Activated CD4-positive, alpha-beta T cell treated with anti-CD3 and anti-CD28 coated beads for 36 hours (primary cell): ENCODE measurements at regions of chr18 and their contacts with region 1.

Region 1: GRCh38 chr18:63422087-63422809 is at the start of gene VPS4B:
- DNase-seq: peak; percentile 100
- ATAC-seq: peak; percentile 95
- H3K4me3 Mint-ChIP-seq: peak within 1 kb of the TSS; percentile 99
- H3K27ac Mint-ChIP-seq: peak within 1 kb of the TSS; percentile 95
- H3K4me1 Mint-ChIP-seq: peaks cover 30% of the 10 kb centered on the region
- H3K27me3 Mint-ChIP-seq: no peaks in the 10 kb centered on the region
- total RNA-seq, gene VPS4B: 40.7 to 48.4 TPM

Region 2: DNA sequence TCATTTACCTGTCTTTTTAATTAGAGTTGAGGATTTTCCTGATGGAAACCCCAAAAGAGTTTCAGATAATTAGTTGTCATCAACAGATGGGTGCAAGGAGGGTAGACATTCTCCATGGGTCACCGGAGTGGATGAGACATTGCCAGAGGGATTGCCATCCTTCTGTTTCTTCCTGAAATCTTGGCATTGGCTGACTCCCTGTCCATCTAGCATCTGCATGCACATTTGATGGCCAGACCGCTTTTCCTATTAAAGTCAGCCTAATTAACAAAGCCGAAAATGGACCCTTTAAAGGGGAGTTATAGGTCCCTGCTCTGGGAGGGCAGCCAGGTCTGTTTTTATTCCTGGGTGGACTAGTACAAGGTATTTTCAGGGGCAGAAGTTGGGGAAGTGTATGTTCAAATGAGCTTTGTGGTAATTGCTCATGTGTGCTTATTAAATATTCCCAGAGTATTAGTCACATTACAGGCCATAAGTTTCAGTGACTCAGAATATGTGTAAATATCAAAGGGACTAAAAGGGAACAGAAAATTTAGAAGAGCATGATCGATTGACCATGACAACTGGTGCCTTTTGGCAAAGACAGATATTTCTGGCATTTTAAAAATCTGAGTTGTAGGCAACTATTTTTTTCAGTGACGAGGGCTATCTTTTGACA is 497.1 kb before region 1 on chr18:
- CTCF ChIA-PET with region 1: no interaction called
- POLR2A ChIA-PET with region 1: no interaction called
- intact Hi-C with region 1: no loop called
- DNase-seq: no peak
- ATAC-seq: no peak
- H3K4me3 Mint-ChIP-seq: no peak overlapping the region
- H3K27ac Mint-ChIP-seq: no peak overlapping the region
- H3K4me1 Mint-ChIP-seq: no peaks in the 10 kb centered on the region
- H3K27me3 Mint-ChIP-seq: no peaks in the 10 kb centered on the region

Region 3: DNA sequence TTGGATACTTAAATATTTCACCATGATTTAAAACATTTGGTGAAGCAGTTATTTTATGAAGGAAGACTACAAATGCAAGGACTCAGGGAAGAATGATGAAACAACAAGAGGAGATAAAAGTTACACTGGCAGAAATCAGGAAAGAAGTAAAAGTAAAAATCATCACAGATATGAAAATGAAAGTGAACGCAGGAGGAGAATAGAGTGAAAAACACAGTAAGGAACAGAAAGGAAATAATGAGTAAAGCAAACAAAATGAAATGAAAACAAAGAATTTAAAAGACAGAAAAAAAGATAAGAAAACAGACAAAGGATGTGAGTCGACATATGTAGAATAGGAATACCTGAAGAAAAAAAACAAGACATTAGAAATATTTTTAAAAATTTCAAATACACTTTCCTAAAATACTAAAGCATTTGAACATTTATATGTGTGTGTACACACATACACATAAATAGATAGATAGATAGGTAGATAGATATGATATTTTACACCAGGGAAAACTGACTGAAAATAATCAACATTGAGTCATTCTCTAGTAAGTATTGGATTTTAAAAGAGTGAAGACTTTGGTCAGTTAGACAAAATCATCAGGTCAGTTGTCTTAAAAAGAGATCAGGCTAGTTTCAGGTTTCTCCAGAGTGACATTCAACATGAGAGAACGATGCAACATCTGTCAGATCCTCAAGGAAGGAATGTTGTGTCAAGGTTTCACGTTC is 43.2 kb before region 1 on chr18:
- CTCF ChIA-PET with region 1: no interaction called
- POLR2A ChIA-PET with region 1: no interaction called
- intact Hi-C with region 1: loop called in 1 of 2 experiments (anchors 1 kb)
- DNase-seq: no peak
- ATAC-seq: peak; percentile 69
- H3K4me3 Mint-ChIP-seq: peak overlapping the region; percentile 46
- H3K27ac Mint-ChIP-seq: peak overlapping the region; percentile 79
- H3K4me1 Mint-ChIP-seq: peaks cover 22% of the 10 kb centered on the region
- H3K27me3 Mint-ChIP-seq: no peaks in the 10 kb centered on the region

Region 4: DNA sequence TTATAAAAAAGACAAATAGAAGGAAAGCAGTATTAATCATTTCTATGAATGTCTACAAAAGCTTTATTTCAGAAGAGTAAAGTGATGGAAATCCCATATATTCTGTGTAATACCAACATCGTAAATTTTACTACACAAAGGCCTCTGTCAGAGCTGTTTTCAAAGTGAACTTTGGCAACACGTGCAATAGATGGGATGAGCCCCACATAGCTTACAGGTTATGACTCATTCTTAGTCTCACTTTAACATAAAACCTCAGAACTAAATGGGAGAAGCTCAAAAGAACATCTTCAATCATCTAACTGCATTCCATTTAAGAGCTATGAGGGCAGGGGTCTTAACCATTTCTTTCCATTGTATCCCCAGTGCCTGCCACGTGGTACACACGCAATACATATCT is 11.5 kb before region 1 on chr18:
- CTCF ChIA-PET with region 1: interaction called, 5 read pairs
- POLR2A ChIA-PET with region 1: interaction called, 6 read pairs
- intact Hi-C with region 1: loop called in 1 of 2 experiments (anchors 1 kb)
- DNase-seq: no peak
- ATAC-seq: peak; percentile 91
- H3K4me3 Mint-ChIP-seq: no peak overlapping the region
- H3K27ac Mint-ChIP-seq: peak overlapping the region; percentile 2
- H3K4me1 Mint-ChIP-seq: peaks cover 43% of the 10 kb centered on the region
- H3K27me3 Mint-ChIP-seq: no peaks in the 10 kb centered on the region

Region 5: DNA sequence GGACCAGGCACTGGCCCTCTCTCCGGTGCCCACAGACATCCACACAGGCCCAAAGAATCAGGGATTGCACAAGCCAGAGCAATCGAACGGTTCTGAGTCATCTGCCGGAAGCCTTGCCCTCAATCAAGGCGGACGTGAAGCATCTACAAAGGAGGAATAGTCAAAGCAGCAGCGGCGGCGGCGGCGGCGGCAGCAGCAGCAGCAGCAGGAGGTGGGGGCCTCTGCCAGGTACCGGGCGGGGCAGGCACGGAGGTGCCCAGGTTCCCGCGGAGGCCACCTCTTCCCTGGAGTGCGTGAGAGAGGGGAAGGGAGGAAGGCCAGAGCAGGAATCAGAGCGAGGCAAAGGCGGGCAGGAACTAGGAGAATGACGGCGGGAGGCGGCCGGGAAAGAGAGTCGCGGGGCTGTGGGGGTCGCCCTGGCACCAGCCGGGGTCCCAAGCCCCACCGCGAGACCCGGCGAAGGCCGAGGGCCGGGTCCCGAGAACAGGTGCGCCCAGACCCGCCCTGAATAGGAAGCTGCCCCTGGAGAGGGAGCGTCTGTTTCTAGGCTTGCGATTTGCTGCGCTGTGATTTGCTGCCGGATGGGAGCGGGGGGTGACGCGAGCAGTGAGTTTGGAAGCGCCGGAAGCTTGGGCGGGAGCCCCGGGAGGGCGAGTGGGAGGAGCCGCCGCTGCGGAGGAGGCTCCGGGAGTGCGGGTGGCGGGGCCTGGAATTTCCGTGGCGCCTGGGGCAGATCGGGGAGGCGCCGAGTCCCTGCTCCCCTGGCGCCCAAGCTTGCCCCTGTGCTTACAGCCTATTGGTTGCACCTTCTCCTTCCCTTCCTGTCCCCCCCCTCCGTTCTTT is 547.9 kb after region 1 on chr18 and contains the start of gene SERPINB8:
- CTCF ChIA-PET with region 1: no interaction called
- POLR2A ChIA-PET with region 1: no interaction called
- intact Hi-C with region 1: loop called in 1 of 2 experiments (anchors 2 kb)
- DNase-seq: peak; percentile 92
- ATAC-seq: peak; percentile 90
- H3K4me3 Mint-ChIP-seq: peak within 1 kb of the TSS; percentile 85
- H3K27ac Mint-ChIP-seq: peak within 1 kb of the TSS; percentile 92
- H3K4me1 Mint-ChIP-seq: peaks cover 38% of the 10 kb centered on the region
- H3K27me3 Mint-ChIP-seq: no peaks in the 10 kb centered on the region
- total RNA-seq, gene SERPINB8: 16.0 to 17.1 TPM